ENCODE measurements at regions of chr1 and their contacts with region 1.

Region 1: DNA sequence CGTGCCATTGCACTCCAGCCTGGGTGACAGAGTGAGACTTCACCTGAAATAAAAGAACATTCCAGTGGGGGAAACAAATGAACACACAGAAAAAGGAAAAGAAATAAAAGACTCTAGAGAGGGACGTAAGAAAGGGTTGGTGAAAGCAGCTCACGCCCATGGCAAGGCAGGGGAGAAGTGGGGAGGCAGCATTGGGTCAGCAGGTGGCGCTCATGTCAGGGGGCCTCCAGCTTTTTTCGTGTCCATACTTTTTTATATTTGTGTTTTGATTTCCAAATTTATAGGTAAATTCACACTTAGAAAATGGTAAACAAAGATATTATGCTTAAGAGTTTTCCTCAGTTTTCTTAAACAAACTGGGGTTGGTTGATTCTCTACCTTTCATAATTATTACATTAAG is 45.5 kb downstream of the VPS13D start:
- DNase-seq: peak; percentile 63
- ATAC-seq: no peak
- H3K4me3 Mint-ChIP-seq: no peak overlapping the region
- H3K27ac Mint-ChIP-seq: no peak overlapping the region
- H3K4me1 Mint-ChIP-seq: no peaks in the 10 kb centered on the region
- H3K27me3 Mint-ChIP-seq: no peaks in the 10 kb centered on the region
- CTCF ChIP-seq: peak; percentile 74

Region 2: GRCh38 chr1:12285496-12286143 is 10.3 kb after region 1 on chr1:
- CTCF ChIA-PET with region 1: interaction called, 27 read pairs
- POLR2A ChIA-PET with region 1: interaction called, 4 read pairs
- intact Hi-C with region 1: no loop called
- DNase-seq: no peak
- ATAC-seq: no peak
- H3K4me3 Mint-ChIP-seq: no peak overlapping the region
- H3K27ac Mint-ChIP-seq: no peak overlapping the region
- H3K4me1 Mint-ChIP-seq: peaks cover 6% of the 10 kb centered on the region
- H3K27me3 Mint-ChIP-seq: no peaks in the 10 kb centered on the region
- CTCF ChIP-seq: no peak

Region 3: GRCh38 chr1:12296623-12297022 is 21.3 kb after region 1 on chr1:
- CTCF ChIA-PET with region 1: interaction called, 13 read pairs
- POLR2A ChIA-PET with region 1: interaction called, 4 read pairs
- intact Hi-C with region 1: no loop called
- DNase-seq: no peak
- ATAC-seq: peak; percentile 88
- H3K4me3 Mint-ChIP-seq: no peak overlapping the region
- H3K27ac Mint-ChIP-seq: peak overlapping the region; percentile 74
- H3K4me1 Mint-ChIP-seq: peaks cover 33% of the 10 kb centered on the region
- H3K27me3 Mint-ChIP-seq: no peaks in the 10 kb centered on the region
- CTCF ChIP-seq: no peak

Region 4: DNA sequence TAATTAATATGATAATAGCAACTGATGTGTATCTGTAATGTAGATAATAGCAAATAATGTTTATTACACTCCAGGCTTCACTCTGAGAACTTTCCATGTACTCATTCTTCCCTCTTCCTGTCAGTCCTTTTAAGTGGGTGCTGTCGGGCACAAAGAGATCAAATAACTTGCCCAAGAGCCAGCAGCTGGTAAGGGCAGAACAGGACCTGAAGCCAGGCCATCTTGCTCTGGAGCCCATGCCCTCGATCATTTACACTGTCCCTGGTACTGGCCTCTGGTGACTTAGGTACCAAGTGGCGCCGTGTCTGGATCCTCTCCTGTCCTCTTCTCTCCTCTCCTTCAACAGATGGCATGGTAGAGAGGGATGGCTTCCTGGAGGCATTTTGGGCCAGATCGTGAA is 51.6 kb after region 1 on chr1:
- CTCF ChIA-PET with region 1: no interaction called
- POLR2A ChIA-PET with region 1: no interaction called
- intact Hi-C with region 1: no loop called
- DNase-seq: no peak
- ATAC-seq: no peak
- H3K4me3 Mint-ChIP-seq: no peak overlapping the region
- H3K27ac Mint-ChIP-seq: no peak overlapping the region
- H3K4me1 Mint-ChIP-seq: peaks cover 9% of the 10 kb centered on the region
- H3K27me3 Mint-ChIP-seq: no peaks in the 10 kb centered on the region
- CTCF ChIP-seq: no peak

Region 5: GRCh38 chr1:12549460-12550349 is 274.3 kb after region 1 on chr1:
- CTCF ChIA-PET with region 1: no interaction called
- POLR2A ChIA-PET with region 1: no interaction called
- intact Hi-C with region 1: no loop called
- DNase-seq: peak; percentile 53
- ATAC-seq: peak; percentile 31
- H3K4me3 Mint-ChIP-seq: no peak overlapping the region
- H3K27ac Mint-ChIP-seq: peak overlapping the region; percentile 48
- H3K4me1 Mint-ChIP-seq: peaks cover 12% of the 10 kb centered on the region
- H3K27me3 Mint-ChIP-seq: peaks cover 1% of the 10 kb centered on the region
- CTCF ChIP-seq: no peak

Measured in activated CD8-positive, alpha-beta T cell treated with anti-CD3 and anti-CD28 coated beads for 36 hours (primary cell).